Left cardiac atrium (tissue), 4 donors: ENCODE measurements at regions of chr5 and their contacts with region 1.

Region 1: GRCh38 chr5:76867827-76868693 is 18.2 kb downstream of the S100Z start:
- DNase-seq: peak; percentile 55
- ATAC-seq: peak; percentile 85 to 94

Region 2: GRCh38 chr5:77015938-77016569 is 148.0 kb after region 1 on chr5:
- intact Hi-C with region 1: loop called (anchors 1 to 5 kb)
- DNase-seq: no peak
- ATAC-seq: peak in 1 of 2 donors; percentile 38

Region 3: GRCh38 chr5:77035950-77036349 is 167.9 kb after region 1 on chr5:
- intact Hi-C with region 1: no loop called
- DNase-seq: no peak
- ATAC-seq: no peak